B cell (primary cell): ENCODE measurements at regions of chr1 and their contacts with region 1.

Region 1: GRCh38 chr1:61461406-61462384 is 263.2 kb downstream of the TM2D1 start:
- DNase-seq: no peak
- ATAC-seq: no peak
- H3K4me3 ChIP-seq: no peak overlapping the region
- H3K4me3 Mint-ChIP-seq: no peak overlapping the region
- H3K27ac ChIP-seq: no peak overlapping the region
- H3K27ac Mint-ChIP-seq: no peak overlapping the region
- H3K4me1 ChIP-seq: no peaks in the 10 kb centered on the region
- H3K4me1 Mint-ChIP-seq: no peaks in the 10 kb centered on the region
- H3K27me3 ChIP-seq: no peaks in the 10 kb centered on the region
- H3K27me3 Mint-ChIP-seq: peaks cover 3% of the 10 kb centered on the region
- CTCF ChIP-seq: no peak

Region 2: DNA sequence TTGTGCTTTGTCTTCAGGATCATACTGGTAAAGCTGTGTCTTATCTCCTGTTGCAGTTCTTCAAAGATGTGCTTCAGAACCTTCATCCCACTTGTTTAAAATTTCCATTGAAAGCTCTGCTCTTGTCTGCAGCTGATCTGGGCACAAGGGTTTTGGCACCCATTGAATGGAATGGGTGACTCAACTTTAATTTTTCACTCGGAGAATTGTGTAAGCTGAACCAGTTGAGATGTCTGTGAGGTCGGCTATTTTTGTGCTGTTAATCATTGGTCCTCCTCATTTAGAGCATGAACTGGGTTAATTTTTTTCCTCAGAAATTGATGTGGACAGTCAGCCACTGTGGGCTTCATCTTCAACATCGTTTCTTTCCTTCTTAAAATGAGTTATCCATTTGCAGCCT is 11.2 kb after region 1 on chr1:
- CTCF ChIA-PET with region 1: no interaction called
- POLR2A ChIA-PET with region 1: interaction called, 10 read pairs
- intact Hi-C with region 1: no loop called
- DNase-seq: no peak
- ATAC-seq: no peak
- H3K4me3 ChIP-seq: no peak overlapping the region
- H3K4me3 Mint-ChIP-seq: no peak overlapping the region
- H3K27ac ChIP-seq: no peak overlapping the region
- H3K27ac Mint-ChIP-seq: no peak overlapping the region
- H3K4me1 ChIP-seq: no peaks in the 10 kb centered on the region
- H3K4me1 Mint-ChIP-seq: no peaks in the 10 kb centered on the region
- H3K27me3 ChIP-seq: no peaks in the 10 kb centered on the region
- H3K27me3 Mint-ChIP-seq: no peaks in the 10 kb centered on the region
- CTCF ChIP-seq: no peak

Region 3: GRCh38 chr1:61504852-61505390 is 43.2 kb after region 1 on chr1:
- CTCF ChIA-PET with region 1: no interaction called
- POLR2A ChIA-PET with region 1: no interaction called
- intact Hi-C with region 1: no loop called
- DNase-seq: no peak
- ATAC-seq: no peak
- H3K4me3 ChIP-seq: no peak overlapping the region
- H3K4me3 Mint-ChIP-seq: no peak overlapping the region
- H3K27ac ChIP-seq: no peak overlapping the region
- H3K27ac Mint-ChIP-seq: no peak overlapping the region
- H3K4me1 ChIP-seq: no peaks in the 10 kb centered on the region
- H3K4me1 Mint-ChIP-seq: no peaks in the 10 kb centered on the region
- H3K27me3 ChIP-seq: peaks cover 0 to 5% (median 0%) of the 10 kb centered on the region in 4 experiments
- H3K27me3 Mint-ChIP-seq: peaks cover 11% of the 10 kb centered on the region
- CTCF ChIP-seq: no peak